ENCODE measurements at regions of chr3 and their contacts with region 1.

Region 1: DNA sequence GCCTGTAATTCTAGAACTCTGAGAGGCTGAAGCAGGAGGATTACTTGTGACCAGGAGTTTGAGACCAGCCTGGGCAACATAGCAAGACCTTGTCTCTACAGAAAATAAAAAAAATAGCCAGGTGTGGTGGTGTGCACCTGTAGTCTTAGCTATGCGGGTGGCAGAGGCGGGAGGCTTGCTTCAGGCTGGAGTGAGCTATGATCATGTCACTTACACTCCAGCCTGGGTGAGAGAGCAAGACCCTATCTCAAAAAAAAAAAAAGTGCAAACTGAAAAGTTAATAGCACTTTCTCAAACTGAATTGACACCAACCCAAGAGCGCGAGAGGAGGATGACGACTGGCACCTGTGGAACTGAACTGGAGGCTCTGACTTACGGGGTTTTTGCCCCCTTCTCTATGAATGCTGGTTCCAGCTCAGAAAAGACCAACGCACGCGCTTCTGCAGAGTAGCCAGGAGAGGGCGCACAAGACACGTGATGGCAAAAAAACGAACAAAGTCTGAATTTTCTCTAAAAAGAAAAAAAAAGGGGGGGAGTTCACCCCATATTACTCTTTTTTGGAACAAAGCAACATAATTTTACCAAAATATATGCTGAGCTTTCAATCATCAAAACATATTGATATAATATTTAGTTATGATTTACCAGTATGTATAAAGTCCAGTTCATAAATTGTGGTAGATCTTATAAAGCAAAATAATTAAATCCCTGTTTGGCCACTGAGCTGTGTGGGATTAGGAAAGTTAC is 23.7 kb downstream of the CFAP92 start:
- DNase-seq: peak; percentile 43
- H3K4me3 Mint-ChIP-seq: no peak overlapping the region
- H3K27ac Mint-ChIP-seq: no peak overlapping the region
- H3K4me1 Mint-ChIP-seq: no peaks in the 10 kb centered on the region
- H3K27me3 Mint-ChIP-seq: no peaks in the 10 kb centered on the region
- CTCF ChIP-seq: peak; percentile 93

Region 2: DNA sequence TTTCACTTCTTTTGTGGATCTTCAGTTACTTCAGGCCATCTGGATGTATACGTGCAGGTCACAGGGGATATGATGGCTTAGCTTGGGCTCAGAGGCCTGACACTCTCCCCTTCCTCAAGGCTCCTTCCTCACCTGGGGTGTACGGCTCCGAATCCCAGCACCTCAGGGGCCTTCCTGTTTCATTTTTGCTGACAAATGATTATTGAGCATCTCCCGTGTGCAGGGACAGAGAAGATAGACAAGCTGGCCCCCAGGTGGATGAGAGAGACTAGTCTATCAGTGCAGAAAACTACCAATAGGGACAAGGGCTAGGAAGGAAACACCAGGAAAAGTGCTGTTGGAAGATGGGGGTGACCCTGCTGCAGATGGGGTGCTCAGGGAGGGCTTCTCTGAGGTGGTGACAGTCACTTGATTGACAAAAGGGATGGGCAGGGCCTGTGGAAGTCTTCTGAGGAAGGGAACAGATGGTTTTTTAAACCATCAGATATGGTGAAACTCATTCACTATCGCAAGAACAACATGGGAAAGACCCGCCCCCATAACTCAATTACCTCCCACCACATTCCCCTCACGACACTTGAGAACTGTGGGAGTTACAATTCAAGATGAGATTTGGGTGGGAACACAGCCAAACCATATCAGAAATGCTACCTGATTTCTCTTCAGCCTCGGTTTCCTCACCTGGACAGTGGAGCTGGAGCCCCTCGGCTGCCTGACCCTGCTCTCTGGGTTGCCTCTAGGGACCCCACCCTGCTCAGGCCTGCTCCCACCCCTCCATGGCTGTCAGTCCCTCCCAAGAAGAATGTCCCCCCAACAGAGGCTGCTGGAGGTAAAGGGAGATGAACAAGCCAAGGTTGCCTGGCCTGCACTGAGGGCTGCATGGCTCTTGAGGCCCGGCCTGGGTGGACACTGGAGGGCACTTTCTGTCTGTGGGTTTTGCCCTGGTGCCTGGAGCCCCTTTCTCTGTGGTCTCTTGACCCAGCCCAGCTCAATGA is 127.9 kb before region 1 on chr3:
- CTCF ChIA-PET with region 1: no interaction called
- POLR2A ChIA-PET with region 1: no interaction called
- intact Hi-C with region 1: no loop called
- DNase-seq: no peak
- H3K4me3 Mint-ChIP-seq: no peak overlapping the region
- H3K27ac Mint-ChIP-seq: no peak overlapping the region
- H3K4me1 Mint-ChIP-seq: peaks cover 5% of the 10 kb centered on the region
- H3K27me3 Mint-ChIP-seq: no peaks in the 10 kb centered on the region
- CTCF ChIP-seq: no peak

Region 3: DNA sequence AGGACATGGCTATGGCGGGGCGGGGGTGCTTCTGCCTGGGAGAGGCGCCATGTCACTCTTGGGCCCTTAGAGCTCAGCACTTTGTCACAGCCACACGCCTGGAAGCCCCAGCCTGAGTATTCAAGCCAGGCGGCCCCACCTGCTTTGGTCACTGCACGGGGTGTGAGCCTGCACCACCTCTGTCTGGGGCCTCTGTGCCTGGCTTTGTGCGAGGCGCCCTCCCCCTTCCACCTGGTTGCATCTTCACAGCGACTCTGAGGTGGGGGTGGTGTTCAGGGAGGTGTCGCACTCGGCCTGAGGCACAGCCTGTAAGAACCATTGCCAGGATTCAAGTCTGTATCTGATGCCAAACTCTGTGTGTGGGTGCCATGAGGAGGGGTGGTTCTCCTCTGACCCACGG is 66.7 kb before region 1 on chr3:
- CTCF ChIA-PET with region 1: no interaction called
- POLR2A ChIA-PET with region 1: no interaction called
- intact Hi-C with region 1: no loop called
- DNase-seq: no peak
- H3K4me3 Mint-ChIP-seq: no peak overlapping the region
- H3K27ac Mint-ChIP-seq: no peak overlapping the region
- H3K4me1 Mint-ChIP-seq: no peaks in the 10 kb centered on the region
- H3K27me3 Mint-ChIP-seq: no peaks in the 10 kb centered on the region
- CTCF ChIP-seq: no peak

Region 4: GRCh38 chr3:128983293-128984069 is 13.3 kb after region 1 on chr3:
- CTCF ChIA-PET with region 1: interaction called, 55 read pairs
- POLR2A ChIA-PET with region 1: interaction called, 3 read pairs
- intact Hi-C with region 1: no loop called
- DNase-seq: no peak
- H3K4me3 Mint-ChIP-seq: no peak overlapping the region
- H3K27ac Mint-ChIP-seq: no peak overlapping the region
- H3K4me1 Mint-ChIP-seq: peaks cover 9% of the 10 kb centered on the region
- H3K27me3 Mint-ChIP-seq: peaks cover 10% of the 10 kb centered on the region
- CTCF ChIP-seq: no peak

Region 5: GRCh38 chr3:129016356-129016719 is 46.2 kb after region 1 on chr3:
- CTCF ChIA-PET with region 1: interaction called, 27 read pairs
- POLR2A ChIA-PET with region 1: no interaction called
- intact Hi-C with region 1: loop called (anchors 2 kb)
- DNase-seq: peak; percentile 25
- H3K4me3 Mint-ChIP-seq: no peak overlapping the region
- H3K27ac Mint-ChIP-seq: no peak overlapping the region
- H3K4me1 Mint-ChIP-seq: no peaks in the 10 kb centered on the region
- H3K27me3 Mint-ChIP-seq: no peaks in the 10 kb centered on the region
- CTCF ChIP-seq: no peak

Region 6: GRCh38 chr3:129052675-129053074 is 82.5 kb after region 1 on chr3:
- CTCF ChIA-PET with region 1: interaction called, 61 read pairs
- POLR2A ChIA-PET with region 1: no interaction called
- intact Hi-C with region 1: no loop called
- DNase-seq: no peak
- H3K4me3 Mint-ChIP-seq: no peak overlapping the region
- H3K27ac Mint-ChIP-seq: no peak overlapping the region
- H3K4me1 Mint-ChIP-seq: peaks cover 9% of the 10 kb centered on the region
- H3K27me3 Mint-ChIP-seq: peaks cover 16% of the 10 kb centered on the region
- CTCF ChIP-seq: no peak

Region 7: DNA sequence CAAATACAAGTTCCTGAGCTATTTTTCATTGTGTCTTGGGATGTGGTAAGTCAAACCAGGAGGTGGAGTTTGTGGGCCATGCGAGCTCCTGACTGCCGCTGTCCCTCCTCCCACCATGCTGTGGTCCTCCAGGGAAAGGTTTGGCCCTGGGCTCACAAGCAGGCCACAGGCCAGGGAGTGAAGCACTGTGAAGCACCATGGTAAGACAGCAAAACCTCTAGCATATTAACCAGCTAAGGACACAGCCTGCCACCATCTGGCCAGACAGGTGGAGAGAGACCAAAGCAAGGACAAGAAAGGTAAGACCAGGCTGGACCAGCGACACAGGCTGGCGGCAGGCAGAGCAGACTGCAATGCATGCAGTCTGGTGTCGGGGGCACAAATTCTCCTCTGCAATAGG is 136.2 kb after region 1 on chr3:
- CTCF ChIA-PET with region 1: interaction called, 22 read pairs
- POLR2A ChIA-PET with region 1: no interaction called
- intact Hi-C with region 1: no loop called
- DNase-seq: no peak
- H3K4me3 Mint-ChIP-seq: no peak overlapping the region
- H3K27ac Mint-ChIP-seq: no peak overlapping the region
- H3K4me1 Mint-ChIP-seq: peaks cover 13% of the 10 kb centered on the region
- H3K27me3 Mint-ChIP-seq: no peaks in the 10 kb centered on the region
- CTCF ChIP-seq: no peak

Region 8: DNA sequence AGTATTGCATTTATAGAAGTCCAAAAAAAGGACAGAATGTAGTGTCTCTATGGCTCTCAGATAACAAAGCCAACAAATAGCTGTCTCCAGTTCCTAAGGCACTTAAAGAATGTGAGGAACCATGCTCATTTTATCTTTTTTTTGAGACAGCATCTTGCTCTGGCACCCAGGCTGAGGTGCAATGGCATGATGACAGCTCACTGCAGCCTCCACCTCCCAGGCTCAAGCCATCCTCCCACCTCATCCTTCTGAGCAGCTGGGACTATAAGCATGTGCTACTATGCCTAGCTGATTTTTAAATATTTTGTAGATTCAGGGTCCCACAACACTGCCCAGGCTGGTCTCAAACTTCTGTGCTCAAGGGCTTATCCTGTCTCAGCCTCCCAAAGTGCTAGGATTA is 174.6 kb after region 1 on chr3:
- CTCF ChIA-PET with region 1: interaction called, 14 read pairs
- POLR2A ChIA-PET with region 1: no interaction called
- intact Hi-C with region 1: no loop called
- DNase-seq: no peak
- H3K4me3 Mint-ChIP-seq: no peak overlapping the region
- H3K27ac Mint-ChIP-seq: no peak overlapping the region
- H3K4me1 Mint-ChIP-seq: no peaks in the 10 kb centered on the region
- H3K27me3 Mint-ChIP-seq: no peaks in the 10 kb centered on the region
- CTCF ChIP-seq: no peak

Region 9: GRCh38 chr3:129166579-129167332 is 196.6 kb after region 1 on chr3:
- CTCF ChIA-PET with region 1: interaction called, 24 read pairs
- POLR2A ChIA-PET with region 1: interaction called, 17 read pairs
- intact Hi-C with region 1: loop called (anchors 2 kb)
- DNase-seq: no peak
- H3K4me3 Mint-ChIP-seq: no peak overlapping the region
- H3K27ac Mint-ChIP-seq: no peak overlapping the region
- H3K4me1 Mint-ChIP-seq: peaks cover 17% of the 10 kb centered on the region
- H3K27me3 Mint-ChIP-seq: no peaks in the 10 kb centered on the region
- CTCF ChIP-seq: no peak

Measured in MCF 10A (cell line).